ENCODE measurements at regions of chr6 and their contacts with region 1.

Region 1: GRCh38 chr6:110690084-110690650 is 125.1 kb downstream of the CDK19 start:
- DNase-seq: no peak
- H3K4me3 ChIP-seq: no peak overlapping the region
- H3K27ac ChIP-seq: no peak overlapping the region
- H3K4me1 ChIP-seq: peaks cover 0 to 21% (median 5%) of the 10 kb centered on the region in 4 donors
- H3K27me3 ChIP-seq: no peaks in the 10 kb centered on the region
- CTCF ChIP-seq: no peak
- EP300 ChIP-seq: no peak
- POLR2A ChIP-seq: no peak

Region 2: DNA sequence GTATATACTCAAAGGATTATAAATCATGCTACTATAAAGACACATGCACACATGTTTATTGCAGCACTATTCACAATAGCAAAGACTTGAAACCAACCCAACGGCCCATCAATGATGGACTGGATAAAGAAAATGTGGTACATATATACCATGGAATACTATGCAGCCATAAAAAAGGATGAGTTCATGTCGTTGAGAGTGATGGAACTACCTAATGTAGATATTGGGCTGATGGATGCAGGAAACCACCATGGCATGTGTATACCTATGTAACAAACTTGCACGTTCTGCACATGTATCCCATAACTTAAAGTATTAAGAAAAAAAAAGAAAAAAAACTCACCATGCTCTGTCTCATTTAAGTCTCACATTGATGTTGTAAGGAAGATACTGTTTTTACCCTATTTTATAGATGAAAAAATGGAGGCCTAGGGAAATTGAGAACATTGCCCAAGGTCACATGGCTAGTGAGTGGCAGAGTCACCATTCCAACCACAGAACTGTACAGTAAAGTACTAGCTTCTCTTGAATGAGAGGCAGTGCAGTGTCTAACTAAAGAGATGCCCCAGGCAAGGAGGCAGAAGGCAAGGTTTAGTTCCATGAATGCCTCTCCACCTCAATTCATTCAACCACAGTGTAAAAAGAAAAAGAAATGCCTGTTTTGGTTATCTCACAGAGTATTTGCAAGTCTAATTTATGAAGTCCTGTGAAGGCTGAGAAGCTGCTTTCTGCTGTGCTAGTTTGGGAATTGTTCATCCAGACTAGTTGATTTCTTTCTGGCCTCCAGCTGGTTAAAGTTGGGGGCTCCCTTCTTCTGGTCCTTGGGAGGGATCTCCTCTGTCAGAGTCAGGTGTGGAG is 930.8 kb before region 1 on chr6:
- in situ Hi-C with region 1: no loop called
- intact Hi-C with region 1: no loop called
- DNase-seq: no peak
- H3K4me3 ChIP-seq: no peak overlapping the region
- H3K27ac ChIP-seq: no peak overlapping the region
- H3K4me1 ChIP-seq: peaks cover 0 to 14% (median 5%) of the 10 kb centered on the region in 4 donors
- H3K27me3 ChIP-seq: no peaks in the 10 kb centered on the region
- CTCF ChIP-seq: no peak
- EP300 ChIP-seq: no peak
- POLR2A ChIP-seq: no peak

Region 3: GRCh38 chr6:110938171-110938570 is 248.0 kb after region 1 on chr6:
- in situ Hi-C with region 1: loop called in 2 of 4 experiments (anchors 10 to 25 kb)
- intact Hi-C with region 1: no loop called
- DNase-seq: no peak
- H3K4me3 ChIP-seq: no peak overlapping the region
- H3K27ac ChIP-seq: no peak overlapping the region
- H3K4me1 ChIP-seq: no peaks in the 10 kb centered on the region
- H3K27me3 ChIP-seq: no peaks in the 10 kb centered on the region
- CTCF ChIP-seq: no peak
- EP300 ChIP-seq: no peak
- POLR2A ChIP-seq: no peak